ENCODE measurements at regions of chr3 and their contacts with region 1.

Region 1: DNA sequence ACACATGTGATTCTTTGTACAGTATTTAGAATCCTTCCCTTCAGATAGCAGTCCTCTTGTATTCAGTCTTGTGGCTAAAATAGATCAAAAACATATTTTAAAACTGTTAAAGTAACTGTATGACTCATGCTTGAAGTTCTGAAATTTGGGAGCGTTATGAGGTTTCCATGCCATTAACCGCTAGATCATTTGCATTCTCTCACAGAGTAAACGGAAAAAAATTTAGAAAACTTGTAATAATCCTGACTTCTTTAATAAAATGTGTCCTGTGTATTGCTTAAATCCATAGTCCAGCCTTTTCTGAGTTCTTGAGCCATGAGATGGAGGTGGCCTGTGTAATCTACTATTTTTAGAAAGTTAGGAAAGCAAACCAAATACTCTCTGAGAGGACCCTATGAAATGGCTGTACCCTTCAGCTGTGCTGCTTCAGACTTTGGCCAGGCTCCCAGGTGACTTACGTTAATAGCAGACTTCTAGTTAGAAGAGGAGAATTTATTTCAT is 33.8 kb downstream of the MBNL1 start:
- DNase-seq: no peak
- H3K4me3 ChIP-seq: peak overlapping the region; percentile 43 to 60 (median 52)
- H3K27ac ChIP-seq: peak overlapping the region; percentile 77 to 84 (median 84)
- H3K4me1 ChIP-seq: peaks cover 67 to 97% (median 90%) of the 10 kb centered on the region in 4 donors
- H3K27me3 ChIP-seq: no peaks in the 10 kb centered on the region
- CTCF ChIP-seq: no peak
- EP300 ChIP-seq: no peak
- POLR2A ChIP-seq: no peak

Region 2: GRCh38 chr3:152229692-152230091 is 72.9 kb before region 1 on chr3:
- intact Hi-C with region 1: no loop called
- DNase-seq: no peak
- H3K4me3 ChIP-seq: no peak overlapping the region
- H3K27ac ChIP-seq: no peak overlapping the region
- H3K4me1 ChIP-seq: peaks cover 0 to 20% (median 17%) of the 10 kb centered on the region in 4 donors
- H3K27me3 ChIP-seq: no peaks in the 10 kb centered on the region
- CTCF ChIP-seq: peak in 2 of 3 experiments; percentile 6
- EP300 ChIP-seq: no peak
- POLR2A ChIP-seq: no peak

Region 3: GRCh38 chr3:152405915-152406802 is 103.6 kb after region 1 on chr3:
- intact Hi-C with region 1: loop called (anchors 10 kb)
- DNase-seq: no peak
- H3K4me3 ChIP-seq: peak overlapping the region in 3 of 4 donors; percentile 2 to 36 (median 25)
- H3K27ac ChIP-seq: peak overlapping the region; percentile 73 to 82 (median 78)
- H3K4me1 ChIP-seq: peaks cover 50 to 94% (median 84%) of the 10 kb centered on the region in 4 donors
- H3K27me3 ChIP-seq: no peaks in the 10 kb centered on the region
- CTCF ChIP-seq: no peak
- EP300 ChIP-seq: no peak
- POLR2A ChIP-seq: no peak

Measured in esophagus muscularis mucosa (tissue), 4 donors.